GM10248 (cell line): ENCODE measurements at regions of chr5 and their contacts with region 1.

Region 1: DNA sequence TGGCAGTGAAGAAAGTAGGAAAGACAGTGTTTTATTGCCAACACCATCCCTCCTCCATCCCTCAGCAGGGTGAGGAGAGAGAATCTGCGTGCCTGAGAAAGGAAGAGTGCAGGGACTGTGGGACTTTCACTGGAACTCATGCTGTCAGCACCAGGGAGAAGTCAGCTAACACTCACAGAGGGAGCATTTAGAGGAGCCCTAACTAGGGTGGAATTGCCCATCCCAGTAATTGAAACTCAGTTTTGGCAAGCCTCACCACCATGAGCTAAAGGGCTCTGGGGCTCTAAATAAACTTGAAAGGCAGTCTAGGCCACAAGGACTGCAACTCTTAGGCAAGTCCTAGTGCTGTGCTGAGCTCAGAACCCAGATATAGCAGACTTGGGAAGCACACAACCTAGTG is 622.3 kb downstream of the SEMA5A start:
- DNase-seq: no peak
- CTCF ChIP-seq: no peak

Region 2: DNA sequence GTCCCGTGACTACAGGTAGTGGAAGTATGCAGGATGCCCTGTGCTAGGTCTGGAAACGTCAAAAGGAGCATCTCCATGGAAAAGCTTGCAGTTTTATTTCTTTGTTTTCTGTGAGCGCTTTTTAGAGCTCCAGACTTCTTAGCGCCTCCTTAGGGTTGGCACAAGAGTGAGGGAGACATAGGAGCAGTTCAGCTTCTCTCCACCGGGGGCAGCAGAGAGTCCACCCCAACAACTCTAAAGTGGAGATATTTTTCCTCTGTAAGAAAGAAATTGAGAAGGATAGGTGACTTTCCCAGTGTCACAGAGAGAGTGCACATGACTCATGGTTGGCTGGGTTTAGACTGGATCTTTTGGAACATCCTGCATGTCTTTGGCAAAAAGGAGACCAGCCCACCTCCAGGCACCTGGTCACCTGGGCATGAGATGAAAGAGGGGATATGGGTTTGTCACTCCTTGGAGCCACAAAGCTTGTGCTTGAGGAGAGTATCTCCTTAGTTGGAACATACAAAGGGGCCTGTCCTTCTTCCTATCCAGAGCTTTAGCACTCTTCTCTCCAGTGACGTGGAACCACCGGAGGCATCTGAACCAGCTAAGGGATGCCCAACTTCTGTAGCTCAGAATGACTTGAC is 15.4 kb before region 1 on chr5:
- CTCF ChIA-PET with region 1: interaction called, 12 read pairs
- POLR2A ChIA-PET with region 1: no interaction called
- DNase-seq: peak; percentile 13
- CTCF ChIP-seq: peak; percentile 47

Region 3: GRCh38 chr5:9046756-9047481 is 123.4 kb after region 1 on chr5:
- CTCF ChIA-PET with region 1: no interaction called
- POLR2A ChIA-PET with region 1: no interaction called
- DNase-seq: no peak
- CTCF ChIP-seq: no peak